ENCODE measurements at regions of chr4 and their contacts with region 1.

Region 1: DNA sequence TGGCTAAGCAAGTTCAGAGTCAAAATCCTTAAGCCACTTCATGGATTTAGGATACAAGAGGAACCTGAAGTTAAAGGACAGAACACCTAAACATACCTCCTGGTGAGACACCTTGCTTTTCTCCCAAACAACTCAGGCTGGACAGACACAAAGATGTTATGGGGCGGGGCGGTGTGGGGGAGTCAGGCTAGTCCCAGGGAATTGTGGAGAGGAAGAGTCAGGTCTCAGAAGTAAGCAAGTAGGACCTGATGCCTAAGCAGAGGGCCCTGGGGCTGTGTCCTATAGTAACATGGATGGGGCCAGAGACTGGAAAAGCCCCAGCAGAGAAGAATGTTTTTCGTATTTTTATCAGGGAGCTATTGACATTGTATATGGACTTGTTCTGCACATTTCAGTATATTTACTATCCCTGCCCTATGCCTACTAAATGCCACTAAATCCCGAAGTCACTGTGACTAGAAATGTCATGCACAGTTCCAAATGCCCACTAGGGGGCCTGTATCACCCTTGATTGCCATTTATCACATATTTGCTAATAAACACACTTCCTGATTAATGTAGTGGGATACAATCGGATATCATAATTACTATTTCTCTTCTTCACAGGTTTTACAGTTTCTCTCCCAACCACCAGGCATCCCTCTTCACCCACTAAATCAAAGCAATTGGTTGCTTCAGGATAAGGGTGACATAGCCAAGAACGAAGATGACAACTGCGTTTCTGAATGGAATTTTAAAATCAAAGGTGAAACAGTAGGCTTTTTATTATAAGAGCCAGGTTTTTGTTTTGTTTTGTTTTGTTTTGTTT is 23.8 kb upstream of the ARHGAP10 start:
- DNase-seq: no peak
- H3K4me3 ChIP-seq: no peak overlapping the region
- H3K27ac ChIP-seq: no peak overlapping the region
- H3K27me3 ChIP-seq: no peaks in the 10 kb centered on the region
- CTCF ChIP-seq: peak; percentile 86

Region 2: DNA sequence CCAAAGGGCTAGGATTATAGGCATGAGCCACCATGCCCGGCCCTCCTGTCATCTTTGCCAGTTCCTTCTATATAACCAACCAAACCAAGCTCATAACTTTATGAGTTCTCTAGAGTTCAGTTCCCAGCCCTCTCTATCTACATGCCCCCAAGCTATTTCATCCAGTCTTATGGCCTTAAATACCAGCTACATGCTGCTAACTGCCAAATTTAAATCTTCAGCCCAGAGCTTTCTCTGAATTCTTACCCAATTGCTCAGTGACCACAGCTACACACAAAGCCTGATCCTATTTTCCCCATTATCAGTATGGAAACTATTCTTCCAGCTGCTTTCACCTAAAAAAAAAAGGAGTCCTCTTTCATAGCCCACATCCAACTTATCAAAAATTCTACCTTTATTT is 67.7 kb before region 1 on chr4:
- CTCF ChIA-PET with region 1: no interaction called
- POLR2A ChIA-PET with region 1: no interaction called
- DNase-seq: no peak
- H3K4me3 ChIP-seq: no peak overlapping the region
- H3K27ac ChIP-seq: no peak overlapping the region
- H3K27me3 ChIP-seq: no peaks in the 10 kb centered on the region
- CTCF ChIP-seq: no peak

Region 3: DNA sequence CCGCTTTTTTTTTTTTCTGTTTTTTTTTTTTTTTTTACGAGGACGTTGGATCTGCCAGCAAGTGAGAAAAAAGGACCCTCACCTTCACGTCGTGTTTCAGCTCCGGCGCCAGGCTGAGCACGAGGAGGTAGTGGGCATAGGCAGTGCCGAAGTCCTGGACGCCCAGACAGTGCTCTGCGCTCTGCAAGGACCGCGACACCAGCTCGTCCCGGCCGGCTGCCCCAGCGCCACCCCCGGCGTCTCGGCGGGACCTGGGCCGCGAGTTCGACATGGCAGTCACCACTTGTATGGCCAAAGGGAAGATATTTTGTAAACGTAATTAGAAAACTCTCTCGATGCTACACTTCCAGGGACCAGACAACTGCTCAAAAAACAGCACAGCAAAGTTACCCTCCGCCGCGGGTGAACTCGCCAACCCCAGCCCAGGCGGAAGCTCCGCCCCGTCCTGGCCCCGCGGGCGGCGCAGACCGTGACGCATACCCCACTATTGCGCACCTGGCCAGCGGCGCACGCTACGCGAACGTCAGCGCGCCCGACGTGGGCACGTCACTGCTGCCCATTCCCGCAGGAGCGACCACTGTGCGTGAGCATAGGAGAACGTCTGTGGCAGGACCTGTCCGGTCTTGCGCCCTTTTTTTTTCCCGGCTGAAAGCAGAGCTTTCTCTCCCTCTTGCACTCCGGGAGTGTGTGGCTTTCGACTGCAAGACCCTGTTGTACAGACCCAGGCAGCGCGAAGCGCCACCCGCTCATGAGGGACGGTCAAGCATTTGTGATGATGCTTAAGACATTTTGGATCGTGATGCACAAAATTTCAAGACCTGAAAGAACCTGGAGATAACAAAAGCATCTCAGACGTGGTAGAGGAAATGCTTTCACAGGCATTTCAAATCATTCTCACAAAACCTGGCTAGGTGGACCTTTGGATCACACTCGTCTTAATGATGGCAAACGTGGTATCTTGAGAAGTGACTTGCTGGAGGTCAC is 24.1 kb before region 1 on chr4 and contains the start of gene PRMT9:
- CTCF ChIA-PET with region 1: interaction called, 14 read pairs
- POLR2A ChIA-PET with region 1: interaction called, 3 read pairs
- DNase-seq: peak; percentile 80
- H3K4me3 ChIP-seq: peak within 1 kb of the TSS; percentile 87
- H3K27ac ChIP-seq: peak within 1 kb of the TSS; percentile 87
- H3K27me3 ChIP-seq: no peaks in the 10 kb centered on the region
- CTCF ChIP-seq: no peak
- polyA plus RNA-seq, gene PRMT9: 9.4 and 12.4 TPM in 2 replicates

Region 4: GRCh38 chr4:147696863-147697262 is 11.2 kb before region 1 on chr4:
- CTCF ChIA-PET with region 1: interaction called, 18 read pairs
- POLR2A ChIA-PET with region 1: no interaction called
- DNase-seq: no peak
- H3K4me3 ChIP-seq: no peak overlapping the region
- H3K27ac ChIP-seq: no peak overlapping the region
- H3K27me3 ChIP-seq: peaks cover 5% of the 10 kb centered on the region
- CTCF ChIP-seq: no peak

Region 5: GRCh38 chr4:148192526-148192925 is 484.5 kb after region 1 on chr4:
- CTCF ChIA-PET with region 1: no interaction called
- POLR2A ChIA-PET with region 1: no interaction called
- DNase-seq: no peak
- H3K4me3 ChIP-seq: no peak overlapping the region
- H3K27ac ChIP-seq: no peak overlapping the region
- H3K27me3 ChIP-seq: no peaks in the 10 kb centered on the region
- CTCF ChIP-seq: no peak

Measured in AG04450 (cell line).